A549 (cell line): ENCODE measurements at regions of chr19 and their contacts with region 1.

Region 1: GRCh38 chr19:12796146-12797071 is 5.1 kb downstream of the JUNB start:
- DNase-seq: peak in 1 of 2 experiments; percentile 86
- ATAC-seq: peak; percentile 27 to 34; a peak in 4 of 6 replicates
- H3K4me3 ChIP-seq: no peak overlapping the region
- H3K27ac ChIP-seq: peak overlapping the region; percentile 69 to 84
- H3K4me1 ChIP-seq: peaks cover 21% of the 10 kb centered on the region
- CTCF ChIP-seq: peak; percentile 90
- EP300 ChIP-seq: no peak
- POLR2A ChIP-seq: no peak
- RAD21 ChIP-seq: peak; percentile 95 to 98

Region 2: GRCh38 chr19:12722566-12723380 is 73.6 kb before region 1 on chr19:
- CTCF ChIA-PET with region 1: interaction called, 46 read pairs
- POLR2A ChIA-PET with region 1: interaction called, 4 read pairs
- DNase-seq: peak; percentile 96 to 99
- ATAC-seq: peak; percentile 86 to 90
- H3K4me3 ChIP-seq: peak overlapping the region; percentile 76
- H3K27ac ChIP-seq: peak overlapping the region; percentile 91 to 99
- H3K4me1 ChIP-seq: peaks cover 10% of the 10 kb centered on the region; the same call in 1 of the 3 replicates
- CTCF ChIP-seq: no peak
- EP300 ChIP-seq: no peak
- POLR2A ChIP-seq: peak; percentile 38; the same call in 1 of the 2 replicates
- RAD21 ChIP-seq: no peak

Region 3: GRCh38 chr19:12736995-12737834 is 59.2 kb before region 1 on chr19 and contains the start of gene GET3:
- CTCF ChIA-PET with region 1: interaction called, 18 read pairs
- POLR2A ChIA-PET with region 1: interaction called, 7 read pairs
- DNase-seq: peak; percentile 97 to 100
- ATAC-seq: peak; percentile 92 to 94
- H3K4me3 ChIP-seq: peak within 1 kb of the TSS; percentile 78
- H3K27ac ChIP-seq: peak within 1 kb of the TSS; percentile 86 to 99
- H3K4me1 ChIP-seq: peaks cover 25% of the 10 kb centered on the region
- CTCF ChIP-seq: no peak
- EP300 ChIP-seq: no peak
- POLR2A ChIP-seq: peak; percentile 86
- RAD21 ChIP-seq: no peak
- polyA plus RNA-seq, gene GET3: 84.9 and 87.0 TPM in 2 replicates

Region 4: DNA sequence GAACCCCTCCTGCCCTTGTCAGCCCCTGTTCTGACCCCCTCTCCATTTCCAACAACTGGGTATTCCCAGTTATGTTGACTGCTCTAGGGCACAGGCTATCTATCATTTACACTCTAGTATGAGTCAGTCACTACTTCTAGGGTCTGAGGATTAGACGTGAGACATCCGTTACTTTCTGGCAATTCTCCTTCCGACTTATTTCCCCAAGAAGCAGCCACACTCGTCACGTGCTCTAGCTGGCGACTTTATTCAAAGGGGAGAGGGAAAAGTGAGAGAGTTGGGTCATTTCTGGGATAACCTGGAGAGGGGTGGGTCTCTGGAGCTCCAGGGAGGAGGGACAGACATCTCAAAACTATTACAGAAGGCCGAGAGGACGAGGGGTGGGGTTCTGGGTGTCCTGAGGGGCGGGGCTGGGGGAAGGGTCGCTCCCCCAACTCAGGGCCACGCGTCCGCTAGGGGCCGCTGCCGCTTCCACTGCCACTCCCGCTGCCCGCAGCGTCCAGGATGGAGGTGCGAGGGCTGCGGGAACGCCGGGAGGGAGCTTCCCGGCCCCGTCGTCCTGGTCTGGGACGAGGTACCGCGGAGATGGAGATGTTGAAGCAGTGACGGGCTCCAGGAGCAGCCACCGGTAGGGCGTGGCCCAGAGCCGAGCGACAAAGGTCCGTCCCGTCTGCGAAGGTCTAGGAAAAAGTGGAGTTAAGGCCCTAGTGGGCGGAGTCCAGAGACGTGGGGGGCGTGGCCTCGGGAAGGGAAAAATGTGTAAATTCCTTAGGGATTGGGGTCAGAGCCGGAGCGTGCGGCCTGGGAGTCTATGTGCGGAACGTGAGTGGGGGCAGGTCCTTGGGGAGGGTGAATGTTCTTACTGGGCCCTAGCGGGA is 29.1 kb after region 1 on chr19:
- CTCF ChIA-PET with region 1: interaction called, 10 read pairs
- POLR2A ChIA-PET with region 1: no interaction called
- DNase-seq: peak in 1 of 2 experiments; percentile 57
- ATAC-seq: peak; percentile 72 to 86
- H3K4me3 ChIP-seq: peak overlapping the region; percentile 27; the same call in 2 of the 3 replicates
- H3K27ac ChIP-seq: no peak overlapping the region
- H3K4me1 ChIP-seq: no peaks in the 10 kb centered on the region
- CTCF ChIP-seq: peak; percentile 38
- EP300 ChIP-seq: no peak
- POLR2A ChIP-seq: no peak
- RAD21 ChIP-seq: no peak

Region 5: DNA sequence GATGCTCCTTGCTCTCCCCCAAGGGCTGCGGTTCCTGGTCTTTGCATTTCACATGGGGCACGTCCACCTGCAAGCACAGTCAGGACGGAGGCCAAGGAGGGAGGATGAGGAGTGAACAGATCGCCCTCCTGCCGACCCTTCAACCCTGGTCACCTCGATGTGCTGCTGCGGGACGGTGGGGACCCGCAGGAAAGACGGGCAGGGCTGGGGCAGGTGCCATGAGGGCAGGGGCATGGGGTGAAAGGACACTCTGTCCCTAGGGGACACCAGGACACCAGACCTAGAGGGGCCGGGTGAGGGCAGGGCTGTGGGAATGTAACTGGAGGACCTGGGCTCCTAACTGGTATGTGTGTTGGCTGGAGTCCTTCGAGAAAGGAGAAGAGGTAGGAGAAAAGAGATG is 121.9 kb after region 1 on chr19:
- CTCF ChIA-PET with region 1: no interaction called
- POLR2A ChIA-PET with region 1: no interaction called
- DNase-seq: no peak
- ATAC-seq: no peak
- H3K4me3 ChIP-seq: no peak overlapping the region
- H3K27ac ChIP-seq: no peak overlapping the region
- H3K4me1 ChIP-seq: no peaks in the 10 kb centered on the region
- CTCF ChIP-seq: no peak
- EP300 ChIP-seq: no peak
- POLR2A ChIP-seq: no peak
- RAD21 ChIP-seq: no peak